HepG2 (cell line): ENCODE measurements at regions of chr19 and their contacts with region 1.

Region 1: DNA sequence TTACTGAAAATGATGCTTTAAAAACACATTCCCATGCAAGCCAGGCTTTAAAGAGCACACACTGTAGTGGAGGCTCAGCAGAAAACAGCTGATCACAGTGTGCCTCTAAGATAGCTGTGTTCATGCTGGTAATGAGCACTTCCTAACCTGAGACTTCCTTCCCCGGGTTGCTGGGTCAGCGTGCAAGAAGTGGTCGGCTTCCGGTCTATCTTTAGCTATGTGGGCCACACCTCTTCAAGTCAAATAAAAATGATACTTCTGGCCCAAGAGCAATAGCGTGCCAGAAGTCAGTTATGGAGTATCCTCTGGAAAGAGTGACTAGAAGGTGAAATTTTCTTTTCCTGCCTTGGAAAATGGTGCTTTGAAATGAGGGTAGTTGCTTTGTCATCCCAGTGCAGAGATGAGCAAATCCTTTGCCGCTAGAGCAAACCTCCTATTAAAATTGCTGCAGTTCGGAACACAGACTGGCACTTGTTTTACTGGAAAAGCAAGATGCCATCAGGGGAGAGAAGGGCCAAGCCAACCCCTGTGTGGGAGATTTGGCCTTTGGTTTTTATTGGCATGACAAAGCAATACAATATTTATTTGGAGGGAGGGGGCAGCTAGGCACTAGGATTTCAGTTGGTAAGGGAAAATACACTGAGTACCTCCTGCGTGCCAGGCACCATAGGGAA is 64.2 kb downstream of the ARHGAP35 start:
- DNase-seq: no peak
- ATAC-seq: peak; percentile 24; the same call in 2 of the 3 replicates
- H3K4me3 ChIP-seq: peak overlapping the region in 1 of 3 experiments; percentile 35; a peak in 1 of 6 replicates
- H3K27ac ChIP-seq: peak overlapping the region; percentile 67
- H3K4me1 ChIP-seq: peaks cover 44% of the 10 kb centered on the region
- H3K27me3 ChIP-seq: no peaks in the 10 kb centered on the region
- CTCF ChIP-seq: no peak
- EP300 ChIP-seq: no peak
- POLR2A ChIP-seq: no peak
- RAD21 ChIP-seq: no peak

Region 2: GRCh38 chr19:46860125-46860845 is 64.7 kb before region 1 on chr19:
- CTCF ChIA-PET with region 1: no interaction called
- POLR2A ChIA-PET with region 1: interaction called, 7 read pairs
- in situ Hi-C with region 1: no loop called
- intact Hi-C with region 1: loop called (anchors 1 kb)
- DNase-seq: peak; percentile 96
- ATAC-seq: peak; percentile 74
- H3K4me3 ChIP-seq: peak overlapping the region; percentile 67 to 83 (median 70); a peak in 5 of 6 replicates
- H3K27ac ChIP-seq: peak overlapping the region; percentile 100
- H3K4me1 ChIP-seq: peaks cover 62% of the 10 kb centered on the region
- H3K27me3 ChIP-seq: no peaks in the 10 kb centered on the region; a peak in 1 of 5 replicates
- CTCF ChIP-seq: 0 out of 2 replicates have a peak, but pooled peaks have one; percentile 16
- EP300 ChIP-seq: no peak; a peak in 1 of 4 replicates
- POLR2A ChIP-seq: peak; percentile 85 to 95
- RAD21 ChIP-seq: peak; percentile 79

Region 3: GRCh38 chr19:46890423-46891170 is 34.4 kb before region 1 on chr19:
- CTCF ChIA-PET with region 1: no interaction called
- POLR2A ChIA-PET with region 1: interaction called, 13 read pairs
- in situ Hi-C with region 1: no loop called
- intact Hi-C with region 1: loop called (anchors 5 kb)
- DNase-seq: peak; percentile 99
- ATAC-seq: peak; percentile 97
- H3K4me3 ChIP-seq: peak overlapping the region in 2 of 3 experiments; percentile 8 to 42; a peak in 1 of 6 replicates
- H3K27ac ChIP-seq: peak overlapping the region; percentile 85
- H3K4me1 ChIP-seq: peaks cover 84% of the 10 kb centered on the region
- H3K27me3 ChIP-seq: no peaks in the 10 kb centered on the region
- CTCF ChIP-seq: peak; percentile 53
- EP300 ChIP-seq: peak; percentile 72 to 91; a peak in 3 of 4 replicates
- POLR2A ChIP-seq: peak; percentile 25 to 40; a peak in 2 of 4 replicates
- RAD21 ChIP-seq: peak; percentile 67

Region 4: DNA sequence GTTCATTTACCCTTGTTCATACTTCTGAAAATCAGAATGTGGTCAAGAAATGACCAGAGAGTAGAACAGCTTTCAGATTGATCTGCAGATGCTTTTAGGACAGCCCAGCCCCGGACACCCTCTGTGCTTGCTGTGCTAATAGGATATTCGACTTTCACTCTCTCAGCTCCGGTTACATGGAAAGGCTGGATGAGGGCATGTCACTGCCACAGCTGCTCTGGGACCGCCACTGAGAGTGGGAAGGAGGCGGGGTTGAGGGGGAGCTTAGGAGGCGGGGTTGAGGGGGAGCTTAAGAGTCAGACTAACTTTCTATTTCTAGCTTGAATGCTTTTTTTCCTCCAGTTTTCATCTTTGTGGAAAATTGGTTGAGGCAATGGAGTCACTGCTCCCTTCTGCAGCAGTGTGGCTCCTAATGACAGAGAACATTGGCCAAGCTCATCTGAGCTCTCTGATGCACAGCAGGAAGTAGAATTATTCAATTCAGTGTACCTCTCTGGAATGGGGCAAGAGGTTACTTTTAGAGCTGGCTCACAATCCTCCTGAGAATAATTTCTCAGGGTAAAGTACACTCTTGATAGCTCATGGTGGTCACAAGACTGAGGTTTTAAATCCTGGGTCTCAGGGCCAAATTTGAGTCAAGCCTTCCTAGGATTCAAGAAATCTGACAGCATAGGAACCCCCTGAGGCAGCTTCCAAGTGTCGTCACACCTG is 20.1 kb after region 1 on chr19:
- CTCF ChIA-PET with region 1: no interaction called
- POLR2A ChIA-PET with region 1: interaction called, 10 read pairs
- in situ Hi-C with region 1: no loop called
- intact Hi-C with region 1: no loop called
- DNase-seq: no peak
- ATAC-seq: peak; percentile 54
- H3K4me3 ChIP-seq: no peak overlapping the region
- H3K27ac ChIP-seq: peak overlapping the region; percentile 58
- H3K4me1 ChIP-seq: peaks cover 80% of the 10 kb centered on the region
- H3K27me3 ChIP-seq: no peaks in the 10 kb centered on the region
- CTCF ChIP-seq: no peak
- EP300 ChIP-seq: no peak
- POLR2A ChIP-seq: no peak
- RAD21 ChIP-seq: no peak

Region 5: GRCh38 chr19:46954993-46955812 is 30.2 kb after region 1 on chr19:
- CTCF ChIA-PET with region 1: no interaction called
- POLR2A ChIA-PET with region 1: interaction called, 23 read pairs
- in situ Hi-C with region 1: no loop called
- intact Hi-C with region 1: no loop called
- DNase-seq: peak; percentile 27
- ATAC-seq: no peak
- H3K4me3 ChIP-seq: peak overlapping the region; percentile 7 to 61 (median 25); a peak in 4 of 6 replicates
- H3K27ac ChIP-seq: peak overlapping the region; percentile 99
- H3K4me1 ChIP-seq: peaks cover 96% of the 10 kb centered on the region
- H3K27me3 ChIP-seq: no peaks in the 10 kb centered on the region
- CTCF ChIP-seq: no peak
- EP300 ChIP-seq: no peak
- POLR2A ChIP-seq: no peak
- RAD21 ChIP-seq: no peak

Region 6: GRCh38 chr19:46984077-46985010 is 59.3 kb after region 1 on chr19:
- CTCF ChIA-PET with region 1: no interaction called
- POLR2A ChIA-PET with region 1: no interaction called
- in situ Hi-C with region 1: no loop called
- intact Hi-C with region 1: loop called (anchors 5 kb)
- DNase-seq: peak; percentile 90
- ATAC-seq: peak; percentile 88
- H3K4me3 ChIP-seq: peak overlapping the region in 2 of 3 experiments; percentile 8 to 52; a peak in 3 of 6 replicates
- H3K27ac ChIP-seq: peak overlapping the region; percentile 79
- H3K4me1 ChIP-seq: peaks cover 35% of the 10 kb centered on the region
- H3K27me3 ChIP-seq: no peaks in the 10 kb centered on the region
- CTCF ChIP-seq: peak; percentile 16; the same call in 1 of the 2 replicates
- EP300 ChIP-seq: peak in 1 of 2 experiments; percentile 81; a peak in 2 of 4 replicates
- POLR2A ChIP-seq: peak in 1 of 2 experiments; percentile 51; a peak in 1 of 4 replicates
- RAD21 ChIP-seq: 0 out of 2 replicates have a peak, but pooled peaks have one; percentile 34

Region 7: GRCh38 chr19:47020992-47021496 is 96.0 kb after region 1 on chr19:
- CTCF ChIA-PET with region 1: no interaction called
- POLR2A ChIA-PET with region 1: no interaction called
- in situ Hi-C with region 1: no loop called
- intact Hi-C with region 1: no loop called
- DNase-seq: no peak
- ATAC-seq: no peak
- H3K4me3 ChIP-seq: peak overlapping the region; percentile 52 to 77 (median 54); a peak in 4 of 6 replicates
- H3K27ac ChIP-seq: no peak overlapping the region
- H3K4me1 ChIP-seq: peaks cover 24% of the 10 kb centered on the region
- H3K27me3 ChIP-seq: peaks cover 1 to 11% of the 10 kb centered on the region in 2 experiments; a peak in 1 of 5 replicates
- CTCF ChIP-seq: no peak
- EP300 ChIP-seq: no peak
- POLR2A ChIP-seq: no peak
- RAD21 ChIP-seq: no peak

Region 8: GRCh38 chr19:47215581-47215980 is 290.6 kb after region 1 on chr19:
- CTCF ChIA-PET with region 1: no interaction called
- POLR2A ChIA-PET with region 1: no interaction called
- in situ Hi-C with region 1: no loop called
- intact Hi-C with region 1: no loop called
- DNase-seq: no peak
- ATAC-seq: no peak
- H3K4me3 ChIP-seq: no peak overlapping the region
- H3K27ac ChIP-seq: no peak overlapping the region
- H3K4me1 ChIP-seq: peaks cover 7% of the 10 kb centered on the region
- H3K27me3 ChIP-seq: no peaks in the 10 kb centered on the region
- CTCF ChIP-seq: no peak
- EP300 ChIP-seq: no peak
- POLR2A ChIP-seq: no peak
- RAD21 ChIP-seq: no peak